Activated CD8-positive, alpha-beta T cell treated with anti-CD3 and anti-CD28 coated beads for 36 hours (primary cell): ENCODE measurements at regions of chr11 and their contacts with region 1.

Region 1: GRCh38 chr11:66344550-66345315 is at the start of gene BRMS1:
- DNase-seq: peak; percentile 99
- ATAC-seq: peak; percentile 78
- H3K4me3 Mint-ChIP-seq: peak within 1 kb of the TSS; percentile 95
- H3K27ac Mint-ChIP-seq: peak within 1 kb of the TSS; percentile 92
- H3K4me1 Mint-ChIP-seq: peaks cover 43% of the 10 kb centered on the region
- H3K27me3 Mint-ChIP-seq: peaks cover 2% of the 10 kb centered on the region
- CTCF ChIP-seq: peak; percentile 14
- total RNA-seq, gene BRMS1: 35.7 to 35.9 TPM

Region 2: DNA sequence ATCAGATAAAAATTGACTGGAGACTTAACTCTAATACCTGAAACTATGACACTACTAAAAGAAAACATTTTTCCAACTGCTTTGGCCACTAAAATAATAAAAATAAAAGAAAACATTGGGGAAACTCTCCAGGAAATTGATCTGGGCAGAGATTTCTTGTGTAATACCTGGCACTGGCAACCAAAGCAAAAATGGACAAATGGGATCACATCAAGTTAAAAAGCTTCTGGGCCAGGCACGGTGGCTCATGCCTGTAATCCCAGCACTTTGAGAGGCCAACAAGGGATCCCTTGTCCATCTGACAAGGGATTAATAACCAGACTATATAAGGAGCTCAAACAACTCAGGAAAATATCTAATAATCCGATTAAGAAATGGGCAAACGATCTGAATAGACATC is 140.9 kb before region 1 on chr11:
- CTCF ChIA-PET with region 1: no interaction called
- POLR2A ChIA-PET with region 1: no interaction called
- intact Hi-C with region 1: no loop called
- DNase-seq: no peak
- ATAC-seq: no peak
- H3K4me3 Mint-ChIP-seq: no peak overlapping the region
- H3K27ac Mint-ChIP-seq: no peak overlapping the region
- H3K4me1 Mint-ChIP-seq: peaks cover under 1% of the 10 kb centered on the region
- H3K27me3 Mint-ChIP-seq: no peaks in the 10 kb centered on the region
- CTCF ChIP-seq: no peak

Region 3: DNA sequence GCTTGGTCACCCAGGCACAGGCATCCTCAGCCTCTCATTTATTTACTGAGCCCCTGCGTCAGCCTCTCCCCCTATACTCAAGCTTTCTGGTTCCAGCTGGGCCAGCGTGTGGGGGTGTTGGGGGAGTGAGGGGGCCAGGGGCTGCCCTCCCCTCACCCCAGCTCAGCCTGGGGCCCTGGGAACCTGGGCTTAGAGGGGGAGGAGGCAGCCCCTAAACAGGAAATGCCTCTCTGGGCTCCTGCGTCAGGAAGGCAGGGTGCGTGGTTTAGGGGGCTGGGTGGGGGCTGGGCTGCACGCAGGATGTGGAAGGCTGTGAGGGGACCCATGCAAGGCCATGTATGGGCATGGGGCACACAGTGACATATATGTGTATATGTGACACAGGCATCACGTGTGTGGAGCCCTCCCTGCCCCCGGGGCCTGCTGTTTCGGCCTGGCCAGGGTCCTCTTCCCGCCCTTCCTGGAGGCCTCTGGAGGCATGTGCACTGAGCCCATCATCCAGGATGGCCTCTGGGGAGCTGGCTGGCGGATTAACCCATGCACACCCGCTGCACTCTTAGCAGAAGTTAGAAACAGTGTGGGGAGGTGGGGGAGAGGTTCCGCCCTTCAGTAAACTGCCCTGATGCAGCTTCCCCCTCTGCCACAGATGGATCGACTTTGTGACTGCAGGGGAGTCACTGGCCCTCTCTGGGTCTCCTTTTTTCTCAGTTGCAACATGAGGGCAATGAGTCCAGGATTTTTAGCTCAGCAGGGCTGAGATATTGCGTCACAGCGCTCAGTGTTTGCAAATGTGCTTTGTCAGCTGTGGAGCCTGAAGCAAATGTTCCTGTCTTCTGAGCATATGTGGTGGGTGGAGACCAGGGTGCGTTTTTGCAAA is 26.8 kb before region 1 on chr11:
- CTCF ChIA-PET with region 1: interaction called, 44 read pairs
- POLR2A ChIA-PET with region 1: interaction called, 11 read pairs
- intact Hi-C with region 1: loop called (anchors 5 kb)
- DNase-seq: peak; percentile 95
- ATAC-seq: peak; percentile 75
- H3K4me3 Mint-ChIP-seq: peak overlapping the region; percentile 80
- H3K27ac Mint-ChIP-seq: peak overlapping the region; percentile 96
- H3K4me1 Mint-ChIP-seq: peaks cover 56% of the 10 kb centered on the region
- H3K27me3 Mint-ChIP-seq: no peaks in the 10 kb centered on the region
- CTCF ChIP-seq: no peak

Region 4: DNA sequence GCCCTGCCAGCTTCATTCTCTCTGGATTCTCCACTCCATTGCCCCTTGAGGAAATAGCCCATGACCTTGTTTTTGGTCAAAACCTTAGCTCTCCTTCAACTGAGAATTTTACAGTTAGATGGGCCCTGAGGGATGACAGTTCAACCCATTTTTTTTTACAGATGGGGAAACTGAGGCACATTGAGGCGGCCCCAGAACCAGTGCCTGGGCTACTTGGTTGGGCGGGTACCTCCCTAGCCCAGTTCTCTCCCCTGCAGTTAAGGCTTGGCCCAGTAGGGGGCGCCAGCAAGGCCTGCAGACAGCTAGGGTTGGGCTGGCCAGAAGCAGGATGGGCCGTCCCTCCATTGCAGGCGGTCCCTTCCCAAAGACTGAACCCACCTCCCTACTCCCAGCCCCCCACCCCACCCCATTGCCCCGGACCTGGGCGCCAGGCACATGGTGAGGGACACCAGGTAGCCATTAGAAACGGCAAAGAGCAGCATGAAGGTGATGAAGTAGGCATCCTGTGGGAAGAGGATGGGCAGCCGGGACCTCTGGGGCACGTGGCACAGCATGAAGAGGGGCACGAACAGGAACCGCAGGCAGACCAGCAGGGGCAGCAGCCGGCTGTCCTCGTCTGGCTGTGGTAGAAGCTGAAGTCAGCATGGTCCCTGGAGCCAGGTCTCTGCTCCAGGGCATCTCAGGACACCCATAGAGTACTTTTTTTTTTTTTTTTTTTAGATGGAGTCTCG is 19.2 kb after region 1 on chr11:
- CTCF ChIA-PET with region 1: interaction called, 19 read pairs
- POLR2A ChIA-PET with region 1: interaction called, 9 read pairs
- intact Hi-C with region 1: no loop called
- DNase-seq: peak; percentile 88
- ATAC-seq: peak; percentile 92
- H3K4me3 Mint-ChIP-seq: no peak overlapping the region
- H3K27ac Mint-ChIP-seq: no peak overlapping the region
- H3K4me1 Mint-ChIP-seq: peaks cover 4% of the 10 kb centered on the region
- H3K27me3 Mint-ChIP-seq: no peaks in the 10 kb centered on the region
- CTCF ChIP-seq: peak; percentile 93

Region 5: DNA sequence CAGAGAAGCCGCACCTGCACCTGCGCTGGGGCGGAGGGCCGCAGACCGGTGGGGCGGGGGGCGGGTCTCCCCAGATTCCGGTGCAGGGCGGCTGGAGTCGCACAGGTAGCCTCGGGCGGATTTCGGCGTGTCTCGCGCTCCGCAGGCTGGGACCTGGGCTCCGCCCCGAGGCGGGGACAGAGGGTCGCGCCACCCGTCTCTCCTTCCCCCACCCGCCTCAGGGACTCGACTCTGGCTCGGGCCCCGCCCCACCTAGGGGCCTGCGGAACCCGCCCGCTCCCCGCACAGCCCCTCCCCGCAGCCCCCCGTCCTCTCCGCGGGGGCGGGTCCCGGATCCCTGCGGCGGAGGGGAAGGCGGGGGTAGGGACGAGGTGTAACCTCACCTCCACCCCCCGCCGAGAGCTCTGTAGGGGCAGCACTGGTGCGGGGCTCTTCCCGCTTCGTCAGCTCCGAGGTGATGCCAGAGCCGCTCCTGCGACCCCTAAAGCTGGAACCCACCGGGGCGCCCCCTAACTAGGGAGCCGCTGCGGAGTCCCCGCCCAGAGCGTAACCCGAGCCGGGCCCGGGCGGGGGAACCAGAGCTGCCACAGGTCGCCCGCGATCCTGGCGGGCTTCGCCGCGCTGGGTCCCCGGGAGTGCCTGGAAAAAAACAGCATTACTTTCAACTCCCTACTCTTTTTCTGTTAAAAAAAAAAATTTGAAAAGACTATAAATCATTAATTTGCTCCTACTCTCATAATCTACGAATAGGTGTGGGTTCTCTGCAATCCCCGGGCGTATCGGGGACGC is 27.1 kb after region 1 on chr11 and contains the start of gene SLC29A2:
- CTCF ChIA-PET with region 1: interaction called, 3 read pairs
- POLR2A ChIA-PET with region 1: interaction called, 11 read pairs
- intact Hi-C with region 1: no loop called
- DNase-seq: peak; percentile 91
- ATAC-seq: peak; percentile 91
- H3K4me3 Mint-ChIP-seq: peak within 1 kb of the TSS; percentile 85
- H3K27ac Mint-ChIP-seq: peak within 1 kb of the TSS; percentile 90
- H3K4me1 Mint-ChIP-seq: peaks cover 24% of the 10 kb centered on the region
- H3K27me3 Mint-ChIP-seq: no peaks in the 10 kb centered on the region
- CTCF ChIP-seq: no peak
- total RNA-seq, gene SLC29A2: 11.8 to 12.2 TPM

Region 6: GRCh38 chr11:66429983-66430602 is 85.4 kb after region 1 on chr11:
- CTCF ChIA-PET with region 1: no interaction called
- POLR2A ChIA-PET with region 1: no interaction called
- intact Hi-C with region 1: no loop called
- DNase-seq: peak; percentile 93
- ATAC-seq: peak; percentile 87
- H3K4me3 Mint-ChIP-seq: no peak overlapping the region
- H3K27ac Mint-ChIP-seq: no peak overlapping the region
- H3K4me1 Mint-ChIP-seq: peaks cover 3% of the 10 kb centered on the region
- H3K27me3 Mint-ChIP-seq: no peaks in the 10 kb centered on the region
- CTCF ChIP-seq: peak; percentile 85

Region 7: GRCh38 chr11:66466225-66467027 is 121.7 kb after region 1 on chr11 and contains the start of gene PELI3:
- CTCF ChIA-PET with region 1: no interaction called
- POLR2A ChIA-PET with region 1: no interaction called
- intact Hi-C with region 1: no loop called
- DNase-seq: peak; percentile 94
- ATAC-seq: peak; percentile 92
- H3K4me3 Mint-ChIP-seq: peak within 1 kb of the TSS; percentile 86
- H3K27ac Mint-ChIP-seq: peak within 1 kb of the TSS; percentile 81
- H3K4me1 Mint-ChIP-seq: peaks cover 40% of the 10 kb centered on the region
- H3K27me3 Mint-ChIP-seq: no peaks in the 10 kb centered on the region
- CTCF ChIP-seq: no peak
- total RNA-seq, gene PELI3: 6.7 to 10.5 TPM

Region 8: DNA sequence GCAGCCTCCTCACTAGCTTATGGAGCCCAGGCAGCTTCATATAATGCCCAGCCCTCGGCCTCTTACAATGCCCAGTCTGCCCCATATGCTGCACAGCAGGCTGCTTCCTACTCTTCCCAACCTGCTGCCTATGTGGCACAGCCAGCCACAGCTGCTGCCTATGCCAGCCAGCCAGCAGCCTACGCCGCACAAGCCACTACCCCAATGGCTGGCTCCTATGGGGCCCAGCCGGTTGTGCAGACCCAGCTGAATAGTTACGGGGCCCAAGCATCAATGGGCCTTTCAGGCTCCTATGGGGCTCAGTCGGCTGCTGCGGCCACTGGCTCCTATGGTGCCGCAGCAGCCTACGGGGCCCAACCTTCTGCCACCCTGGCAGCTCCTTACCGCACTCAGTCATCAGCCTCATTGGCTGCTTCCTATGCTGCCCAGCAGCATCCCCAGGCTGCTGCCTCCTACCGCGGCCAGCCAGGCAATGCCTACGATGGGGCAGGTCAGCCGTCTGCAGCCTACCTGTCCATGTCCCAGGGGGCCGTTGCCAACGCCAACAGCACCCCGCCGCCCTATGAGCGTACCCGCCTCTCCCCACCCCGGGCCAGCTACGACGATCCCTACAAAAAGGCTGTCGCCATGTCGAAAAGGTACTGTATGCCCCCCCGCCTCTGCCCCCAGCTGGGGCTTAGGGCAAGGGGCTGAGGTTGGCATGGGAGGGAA is 280.5 kb after region 1 on chr11:
- CTCF ChIA-PET with region 1: no interaction called
- POLR2A ChIA-PET with region 1: no interaction called
- intact Hi-C with region 1: no loop called
- DNase-seq: no peak
- ATAC-seq: no peak
- H3K4me3 Mint-ChIP-seq: no peak overlapping the region
- H3K27ac Mint-ChIP-seq: no peak overlapping the region
- H3K4me1 Mint-ChIP-seq: peaks cover 58% of the 10 kb centered on the region
- H3K27me3 Mint-ChIP-seq: no peaks in the 10 kb centered on the region
- CTCF ChIP-seq: no peak